ENCODE measurements at regions of chr16 and their contacts with region 1.

Region 1: DNA sequence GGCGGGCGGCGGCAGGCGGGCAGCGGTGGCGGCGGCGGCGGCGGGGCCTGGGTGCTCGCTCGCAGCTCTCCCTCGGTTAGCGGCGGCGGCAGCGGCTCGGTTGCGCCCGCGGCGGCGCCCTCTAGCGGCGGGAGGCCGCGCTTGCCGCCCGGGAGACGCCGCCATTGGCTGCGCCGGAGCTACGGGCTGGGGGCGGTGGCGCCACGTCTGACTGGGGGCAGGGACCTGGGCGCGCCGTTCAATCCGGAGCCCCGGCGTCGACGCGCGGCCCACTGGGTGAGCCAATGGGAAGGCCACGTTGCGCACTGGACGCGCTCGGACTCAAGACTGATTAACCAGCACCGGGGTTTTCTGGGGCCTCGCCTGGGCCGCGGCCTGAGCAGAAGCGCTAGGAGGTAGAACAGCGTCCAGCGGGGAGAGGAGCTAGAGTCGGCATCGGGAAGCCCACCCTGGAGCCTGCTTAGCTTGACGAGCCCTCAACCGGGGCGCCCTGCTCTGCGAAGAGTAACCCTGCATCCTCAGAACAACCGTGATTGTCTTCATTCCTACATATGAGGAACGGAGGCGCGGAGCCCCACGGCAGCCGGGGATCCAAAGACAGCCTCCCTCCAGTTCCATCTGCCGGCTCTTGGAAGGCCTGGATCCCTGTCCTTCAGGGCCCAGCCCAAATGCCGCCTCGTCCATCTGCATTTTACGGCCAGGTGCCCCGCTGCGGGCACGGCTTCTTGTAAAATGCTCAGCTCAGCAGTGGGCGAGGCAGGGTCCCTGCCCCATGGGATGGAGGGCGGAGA is at the start of gene ZC3H7A:
- DNase-seq: peak; percentile 75
- H3K4me3 ChIP-seq: peak within 1 kb of the TSS; percentile 85
- H3K27me3 ChIP-seq: no peaks in the 10 kb centered on the region
- CTCF ChIP-seq: 0 out of 2 replicates have a peak, but pooled peaks have one; percentile 17
- polyA plus RNA-seq, gene ZC3H7A: 30.4 and 54.9 TPM in 2 replicates

Region 2: GRCh38 chr16:11597239-11598101 is 199.9 kb before region 1 on chr16:
- CTCF ChIA-PET with region 1: no interaction called
- POLR2A ChIA-PET with region 1: no interaction called
- DNase-seq: peak; percentile 33
- H3K4me3 ChIP-seq: no peak overlapping the region
- H3K27me3 ChIP-seq: no peaks in the 10 kb centered on the region
- CTCF ChIP-seq: no peak

Region 3: GRCh38 chr16:11742539-11743307 is 54.6 kb before region 1 on chr16 and contains the start of gene TXNDC11:
- CTCF ChIA-PET with region 1: interaction called, 24 read pairs
- POLR2A ChIA-PET with region 1: interaction called, 6 read pairs
- DNase-seq: peak; percentile 89
- H3K4me3 ChIP-seq: peak within 1 kb of the TSS; percentile 90
- H3K27me3 ChIP-seq: no peaks in the 10 kb centered on the region
- CTCF ChIP-seq: no peak
- polyA plus RNA-seq, gene TXNDC11: 41.6 and 45.1 TPM in 2 replicates

Region 4: GRCh38 chr16:11768849-11769248 is 28.5 kb before region 1 on chr16:
- CTCF ChIA-PET with region 1: interaction called, 10 read pairs
- POLR2A ChIA-PET with region 1: interaction called, 3 read pairs
- DNase-seq: no peak
- H3K4me3 ChIP-seq: no peak overlapping the region
- H3K27me3 ChIP-seq: no peaks in the 10 kb centered on the region
- CTCF ChIP-seq: no peak

Region 5: GRCh38 chr16:11781773-11782172 is 15.6 kb before region 1 on chr16:
- CTCF ChIA-PET with region 1: interaction called, 13 read pairs
- POLR2A ChIA-PET with region 1: interaction called, 3 read pairs
- DNase-seq: no peak
- H3K4me3 ChIP-seq: no peak overlapping the region
- H3K27me3 ChIP-seq: no peaks in the 10 kb centered on the region
- CTCF ChIP-seq: no peak